ENCODE measurements at regions of chr9 and their contacts with region 1.

Region 1: GRCh38 chr9:36036780-36037548 is at the start of gene RECK:
- DNase-seq: peak; percentile 88
- H3K4me3 Mint-ChIP-seq: peak within 1 kb of the TSS; percentile 93
- H3K27ac Mint-ChIP-seq: peak within 1 kb of the TSS; percentile 67
- H3K4me1 Mint-ChIP-seq: peaks cover 39% of the 10 kb centered on the region
- H3K27me3 Mint-ChIP-seq: no peaks in the 10 kb centered on the region
- total RNA-seq, gene RECK: 7.8 to 8.5 TPM

Region 2: GRCh38 chr9:35111001-35111933 is 925.7 kb before region 1 on chr9:
- CTCF ChIA-PET with region 1: no interaction called
- intact Hi-C with region 1: loop called (anchors 1 kb)
- DNase-seq: peak; percentile 97
- H3K4me3 Mint-ChIP-seq: peak overlapping the region; percentile 56
- H3K27ac Mint-ChIP-seq: peak overlapping the region; percentile 88
- H3K4me1 Mint-ChIP-seq: peaks cover 44% of the 10 kb centered on the region
- H3K27me3 Mint-ChIP-seq: no peaks in the 10 kb centered on the region

Region 3: DNA sequence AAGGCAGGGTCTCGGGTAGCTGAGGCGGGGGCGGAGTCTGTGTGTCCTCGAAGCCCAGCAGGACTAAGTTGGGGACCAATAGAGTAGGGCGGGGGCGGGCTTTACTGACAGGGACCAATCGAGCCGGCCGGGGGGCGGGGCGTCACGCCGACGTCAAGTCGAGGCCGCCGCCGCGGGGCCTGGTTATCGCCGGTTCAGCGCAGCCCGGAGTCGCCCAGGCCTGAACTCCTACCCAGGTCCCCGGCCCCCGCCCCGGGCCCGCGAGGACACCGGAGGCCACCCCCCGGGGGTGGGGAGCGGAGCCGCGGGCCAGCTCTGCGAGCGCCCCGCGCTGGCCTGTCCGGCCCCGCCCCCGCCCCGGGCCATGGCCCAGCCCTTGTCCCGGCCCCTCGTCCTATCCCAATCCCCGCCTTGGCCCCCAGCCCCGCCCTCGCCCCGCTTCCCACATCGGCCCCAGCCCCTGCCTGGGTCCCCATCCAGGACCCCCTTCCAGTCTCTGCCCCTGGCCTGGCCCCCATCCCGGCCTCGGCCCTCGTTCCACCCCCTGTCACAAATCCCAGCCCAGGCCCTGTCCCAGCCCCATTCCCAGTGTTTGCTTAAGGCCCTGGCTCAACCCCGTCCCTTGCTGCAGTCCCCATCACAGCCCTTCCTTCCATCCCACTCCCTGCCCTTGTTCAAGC is 207.7 kb before region 1 on chr9 and contains the start of gene TMEM8B:
- CTCF ChIA-PET with region 1: no interaction called
- intact Hi-C with region 1: loop called (anchors 5 kb)
- DNase-seq: peak; percentile 96
- H3K4me3 Mint-ChIP-seq: peak within 1 kb of the TSS; percentile 89
- H3K27ac Mint-ChIP-seq: peak within 1 kb of the TSS; percentile 59
- H3K4me1 Mint-ChIP-seq: peaks cover 24% of the 10 kb centered on the region
- H3K27me3 Mint-ChIP-seq: peaks cover 2% of the 10 kb centered on the region
- total RNA-seq, gene TMEM8B: 6.2 to 6.6 TPM

Region 4: GRCh38 chr9:36092509-36093215 is 55.7 kb after region 1 on chr9:
- CTCF ChIA-PET with region 1: interaction called, 3 read pairs
- intact Hi-C with region 1: loop called (anchors 5 kb)
- DNase-seq: peak; percentile 58
- H3K4me3 Mint-ChIP-seq: no peak overlapping the region
- H3K27ac Mint-ChIP-seq: peak overlapping the region; percentile 59
- H3K4me1 Mint-ChIP-seq: peaks cover 12% of the 10 kb centered on the region
- H3K27me3 Mint-ChIP-seq: no peaks in the 10 kb centered on the region

Region 5: GRCh38 chr9:36148311-36149051 is 111.5 kb after region 1 on chr9:
- CTCF ChIA-PET with region 1: no interaction called
- intact Hi-C with region 1: loop called (anchors 2 kb)
- DNase-seq: peak; percentile 69
- H3K4me3 Mint-ChIP-seq: no peak overlapping the region
- H3K27ac Mint-ChIP-seq: no peak overlapping the region
- H3K4me1 Mint-ChIP-seq: peaks cover 82% of the 10 kb centered on the region
- H3K27me3 Mint-ChIP-seq: no peaks in the 10 kb centered on the region

Region 6: GRCh38 chr9:36258208-36258988 is 221.4 kb after region 1 on chr9 and contains the start of gene GNE:
- CTCF ChIA-PET with region 1: no interaction called
- intact Hi-C with region 1: loop called (anchors 1 kb)
- DNase-seq: peak; percentile 97
- H3K4me3 Mint-ChIP-seq: peak within 1 kb of the TSS; percentile 93
- H3K27ac Mint-ChIP-seq: peak within 1 kb of the TSS; percentile 81
- H3K4me1 Mint-ChIP-seq: peaks cover 14% of the 10 kb centered on the region
- H3K27me3 Mint-ChIP-seq: no peaks in the 10 kb centered on the region
- total RNA-seq, gene GNE: 14.5 to 15.2 TPM

Measured in activated naive CD4-positive, alpha-beta T cell treated with anti-CD3 and anti-CD28 coated beads for 36 hours (primary cell).